RWPE1 (cell line): ENCODE measurements at regions of chr17 and their contacts with region 1.

Region 1: DNA sequence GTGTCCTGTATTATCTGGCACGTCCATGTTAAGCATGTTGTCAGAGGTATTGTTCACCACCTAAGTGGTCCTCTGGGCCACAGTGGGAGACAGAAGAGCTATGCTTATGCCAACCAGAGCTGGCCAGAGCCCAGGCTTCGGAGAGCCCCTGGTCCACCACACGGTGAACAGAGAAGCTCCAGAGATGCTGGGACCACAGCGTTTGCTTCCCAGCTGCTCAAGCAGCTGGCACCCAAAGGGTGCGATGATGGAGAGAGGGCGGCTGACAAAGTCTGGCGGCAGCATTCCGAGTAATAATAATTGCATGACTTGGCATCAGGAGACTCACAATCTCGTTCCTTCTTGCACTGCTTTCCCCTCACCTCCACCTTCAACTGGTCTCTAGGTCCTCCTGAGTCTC is 35.8 kb upstream of the RCVRN start:
- DNase-seq: no peak
- H3K27ac ChIP-seq: no peak overlapping the region
- CTCF ChIP-seq: no peak

Region 2: GRCh38 chr17:9371019-9371418 is 569.8 kb before region 1 on chr17:
- CTCF ChIA-PET with region 1: no interaction called
- POLR2A ChIA-PET with region 1: no interaction called
- DNase-seq: peak; percentile 67
- H3K27ac ChIP-seq: no peak overlapping the region
- CTCF ChIP-seq: no peak

Region 3: DNA sequence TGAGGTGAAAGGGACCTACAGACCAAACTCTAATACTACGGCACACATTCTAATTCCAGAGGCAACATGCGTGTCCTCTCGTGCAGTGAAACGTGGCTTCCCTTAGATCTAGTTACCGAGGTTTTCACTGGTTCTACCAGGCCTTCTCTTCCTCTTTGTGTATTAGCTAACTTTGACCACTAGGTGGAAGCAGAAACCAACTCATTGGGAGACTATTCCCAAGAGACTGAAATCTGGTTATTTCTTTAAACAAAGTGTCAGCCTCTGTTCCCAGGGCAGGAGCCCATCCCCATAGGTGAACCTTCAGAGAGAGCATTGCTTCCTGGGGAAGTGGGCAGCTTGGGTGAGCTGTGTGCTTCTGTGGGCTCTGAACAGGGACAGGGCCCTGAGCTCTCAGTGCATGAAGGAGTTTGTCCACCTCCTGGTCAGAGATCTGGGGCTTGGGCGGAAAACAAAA is 16.1 kb before region 1 on chr17:
- CTCF ChIA-PET with region 1: interaction called, 12 read pairs
- POLR2A ChIA-PET with region 1: no interaction called
- DNase-seq: peak; percentile 71
- H3K27ac ChIP-seq: no peak overlapping the region
- CTCF ChIP-seq: peak; percentile 80